Activated naive CD4-positive, alpha-beta T cell treated with anti-CD3 and anti-CD28 coated beads for 36 hours (primary cell): ENCODE measurements at regions of chr1 and their contacts with region 1.

Region 1: DNA sequence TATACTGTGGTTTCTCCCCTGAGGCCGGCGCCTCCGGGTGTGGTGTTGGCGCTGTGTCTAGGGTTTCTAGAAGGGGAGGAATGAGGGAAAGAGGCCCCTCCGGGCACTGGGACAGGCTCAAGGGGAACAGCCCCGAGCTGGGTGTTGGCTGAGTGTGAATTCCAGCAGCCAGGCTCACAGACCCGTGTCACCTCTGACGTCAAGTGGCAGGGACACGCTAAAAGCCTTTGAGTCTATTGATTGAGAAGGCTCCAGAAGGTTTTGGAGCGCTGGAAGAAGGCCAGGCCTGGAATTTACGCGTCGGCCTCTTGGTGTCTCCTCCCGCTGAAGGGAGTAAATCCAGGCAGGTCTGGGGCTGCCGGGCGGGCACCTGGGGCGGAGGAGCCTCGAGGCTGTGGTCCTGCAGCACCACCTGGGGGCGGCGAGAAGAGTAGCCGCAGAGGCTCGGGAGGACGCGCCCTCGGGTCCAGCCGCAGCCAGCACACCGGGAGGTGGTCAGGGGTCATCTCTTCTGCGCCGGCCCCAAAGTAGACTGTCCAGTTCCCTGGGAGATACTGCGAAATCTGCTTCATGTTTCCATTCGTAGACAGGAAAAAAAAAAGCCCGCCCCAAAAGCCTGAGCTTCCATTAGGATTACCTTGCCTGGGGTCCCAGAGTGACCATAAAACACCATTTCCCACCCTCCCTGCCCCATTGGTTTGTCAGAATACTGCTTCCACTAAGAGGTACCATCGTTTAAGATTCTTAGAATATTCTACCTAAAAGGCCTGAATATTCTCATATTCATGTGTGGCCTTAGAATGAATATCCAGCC is 61.7 kb downstream of the TLR5 start:
- DNase-seq: peak; percentile 81
- H3K4me3 Mint-ChIP-seq: peak overlapping the region; percentile 61
- H3K27ac Mint-ChIP-seq: no peak overlapping the region
- H3K4me1 Mint-ChIP-seq: no peaks in the 10 kb centered on the region
- H3K27me3 Mint-ChIP-seq: no peaks in the 10 kb centered on the region

Region 2: DNA sequence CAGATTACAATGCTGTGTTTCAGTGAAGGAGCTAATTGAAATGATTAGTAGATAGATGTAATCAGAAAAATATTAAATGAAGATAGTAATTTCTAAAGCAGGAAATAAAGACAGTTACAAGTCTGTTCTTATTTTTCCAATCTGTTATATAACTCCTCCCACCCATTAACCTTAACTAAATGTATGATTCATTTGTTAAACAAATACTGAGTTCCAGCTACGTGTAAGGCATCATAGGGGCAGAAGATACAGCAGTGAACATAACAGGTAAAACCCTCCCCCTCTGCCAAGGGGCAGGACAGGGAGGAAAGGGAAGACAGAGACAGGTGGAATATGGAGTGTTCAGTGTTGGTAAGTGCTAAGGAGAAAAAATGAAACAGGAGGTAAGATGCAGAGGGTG is 344.4 kb before region 1 on chr1 and contains the start of gene FAM177B:
- CTCF ChIA-PET with region 1: interaction called, 3 read pairs
- intact Hi-C with region 1: loop called (anchors 1 kb)
- DNase-seq: no peak
- H3K4me3 Mint-ChIP-seq: no peak within 1 kb of the TSS
- H3K27ac Mint-ChIP-seq: no peak within 1 kb of the TSS
- H3K4me1 Mint-ChIP-seq: peaks cover 6% of the 10 kb centered on the region
- H3K27me3 Mint-ChIP-seq: no peaks in the 10 kb centered on the region
- total RNA-seq, gene FAM177B: not detected

Region 3: GRCh38 chr1:223041473-223041872 is 39.9 kb before region 1 on chr1:
- CTCF ChIA-PET with region 1: no interaction called
- intact Hi-C with region 1: no loop called
- DNase-seq: no peak
- H3K4me3 Mint-ChIP-seq: no peak overlapping the region
- H3K27ac Mint-ChIP-seq: no peak overlapping the region
- H3K4me1 Mint-ChIP-seq: no peaks in the 10 kb centered on the region
- H3K27me3 Mint-ChIP-seq: peaks cover 6% of the 10 kb centered on the region